MCF 10A (cell line): ENCODE measurements at regions of chr15 and their contacts with region 1.

Region 1: GRCh38 chr15:76057332-76058000 is 2.3 kb upstream of the TMEM266 start:
- DNase-seq: peak; percentile 60
- H3K4me3 Mint-ChIP-seq: peak overlapping the region; percentile 38
- H3K27ac Mint-ChIP-seq: peak overlapping the region; percentile 21
- H3K4me1 Mint-ChIP-seq: peaks cover 15% of the 10 kb centered on the region
- H3K27me3 Mint-ChIP-seq: peaks cover 21% of the 10 kb centered on the region
- CTCF ChIP-seq: peak; percentile 61

Region 2: GRCh38 chr15:75895731-75896130 is 161.7 kb before region 1 on chr15:
- CTCF ChIA-PET with region 1: no interaction called
- POLR2A ChIA-PET with region 1: no interaction called
- intact Hi-C with region 1: no loop called
- DNase-seq: no peak
- H3K4me3 Mint-ChIP-seq: no peak overlapping the region
- H3K27ac Mint-ChIP-seq: no peak overlapping the region
- H3K4me1 Mint-ChIP-seq: peaks cover 7% of the 10 kb centered on the region
- H3K27me3 Mint-ChIP-seq: no peaks in the 10 kb centered on the region
- CTCF ChIP-seq: no peak

Region 3: DNA sequence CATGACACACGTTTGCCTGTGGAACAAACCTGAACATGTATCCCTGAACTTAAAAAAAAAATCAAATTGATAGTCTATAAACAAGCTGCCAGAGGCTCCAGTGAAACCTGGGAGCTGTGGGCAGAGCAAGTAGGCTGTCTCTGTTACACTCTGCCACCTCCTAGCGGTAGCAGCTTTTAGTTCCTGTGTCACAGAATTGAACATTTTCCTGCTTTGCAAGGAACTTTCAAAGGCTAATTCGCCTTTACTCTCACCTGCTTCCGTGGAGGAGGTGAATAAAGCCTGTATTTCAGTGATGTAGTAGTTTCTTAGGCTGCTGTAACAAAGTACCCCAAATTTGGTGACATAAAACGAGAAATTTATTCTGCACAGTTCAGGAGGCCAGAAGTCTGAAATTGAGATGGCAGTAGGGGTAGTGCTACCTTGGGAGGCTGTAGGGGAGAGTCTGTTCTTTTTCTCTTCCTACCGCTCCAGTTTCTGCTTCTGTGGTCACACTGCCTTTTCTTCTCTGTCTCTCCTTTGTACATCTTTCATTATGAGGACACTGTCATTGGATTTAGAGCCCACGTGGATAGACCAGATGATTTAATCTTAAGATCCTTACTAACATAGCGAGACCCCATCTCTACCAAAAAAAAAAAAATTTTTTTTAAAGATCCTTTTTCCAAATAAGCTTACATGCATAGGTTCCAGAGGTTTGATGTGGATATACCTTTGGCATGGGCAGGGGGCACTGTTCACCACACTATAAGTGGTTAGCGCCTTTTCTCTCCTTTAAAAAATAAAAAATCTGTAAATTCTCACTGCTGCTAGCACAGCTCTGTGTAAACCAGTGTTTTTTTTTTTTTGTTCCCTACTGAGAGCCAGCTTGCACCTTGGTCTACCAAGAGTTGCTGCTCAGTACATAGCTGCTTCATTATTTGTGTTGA is 128.5 kb before region 1 on chr15:
- CTCF ChIA-PET with region 1: interaction called, 5 read pairs
- POLR2A ChIA-PET with region 1: interaction called, 4 read pairs
- intact Hi-C with region 1: loop called (anchors 5 kb)
- DNase-seq: peak; percentile 67
- H3K4me3 Mint-ChIP-seq: no peak overlapping the region
- H3K27ac Mint-ChIP-seq: peak overlapping the region; percentile 7
- H3K4me1 Mint-ChIP-seq: peaks cover 11% of the 10 kb centered on the region
- H3K27me3 Mint-ChIP-seq: no peaks in the 10 kb centered on the region
- CTCF ChIP-seq: peak; percentile 46

Region 4: DNA sequence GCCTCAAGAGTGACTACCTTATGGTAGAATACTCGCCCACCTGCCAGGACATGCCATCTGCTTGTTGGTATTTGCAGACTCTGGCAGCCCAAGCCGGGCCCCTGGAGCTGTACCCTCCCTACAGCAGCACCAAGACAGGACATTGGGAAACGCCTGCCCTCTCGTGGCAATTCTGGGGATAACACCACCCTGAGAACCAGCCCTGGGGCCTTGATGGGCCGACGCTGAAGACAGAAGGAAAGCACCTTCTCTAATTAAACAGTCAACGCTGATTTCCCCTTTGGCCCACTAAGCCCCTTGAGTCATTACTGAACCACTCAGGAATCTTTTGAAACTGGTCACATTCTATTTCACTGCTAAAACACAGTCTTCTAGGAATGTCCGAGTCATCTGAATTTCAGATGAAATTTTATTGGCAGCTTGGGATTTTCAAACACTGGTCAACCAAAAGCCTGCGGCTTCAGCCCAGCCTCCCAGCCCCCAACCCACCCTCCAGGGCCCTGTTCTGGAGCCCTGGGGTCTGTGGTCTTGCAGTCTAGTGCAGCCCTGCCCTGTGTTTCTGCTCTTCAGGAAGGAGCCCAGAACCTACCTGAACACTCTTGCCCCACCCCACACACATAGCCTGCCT is 93.6 kb after region 1 on chr15:
- CTCF ChIA-PET with region 1: interaction called, 16 read pairs
- POLR2A ChIA-PET with region 1: interaction called, 13 read pairs
- intact Hi-C with region 1: no loop called
- DNase-seq: peak; percentile 81
- H3K4me3 Mint-ChIP-seq: no peak overlapping the region
- H3K27ac Mint-ChIP-seq: no peak overlapping the region
- H3K4me1 Mint-ChIP-seq: peaks cover 10% of the 10 kb centered on the region
- H3K27me3 Mint-ChIP-seq: no peaks in the 10 kb centered on the region
- CTCF ChIP-seq: peak; percentile 90

Region 5: GRCh38 chr15:76866716-76867321 is 809.4 kb after region 1 on chr15:
- CTCF ChIA-PET with region 1: interaction called, 3 read pairs
- POLR2A ChIA-PET with region 1: no interaction called
- intact Hi-C with region 1: loop called (anchors 10 kb)
- DNase-seq: peak; percentile 27
- H3K4me3 Mint-ChIP-seq: no peak overlapping the region
- H3K27ac Mint-ChIP-seq: no peak overlapping the region
- H3K4me1 Mint-ChIP-seq: no peaks in the 10 kb centered on the region
- H3K27me3 Mint-ChIP-seq: no peaks in the 10 kb centered on the region
- CTCF ChIP-seq: peak; percentile 37